CD14-positive monocyte (primary cell): ENCODE measurements at regions of chr1 and their contacts with region 1.

Region 1: DNA sequence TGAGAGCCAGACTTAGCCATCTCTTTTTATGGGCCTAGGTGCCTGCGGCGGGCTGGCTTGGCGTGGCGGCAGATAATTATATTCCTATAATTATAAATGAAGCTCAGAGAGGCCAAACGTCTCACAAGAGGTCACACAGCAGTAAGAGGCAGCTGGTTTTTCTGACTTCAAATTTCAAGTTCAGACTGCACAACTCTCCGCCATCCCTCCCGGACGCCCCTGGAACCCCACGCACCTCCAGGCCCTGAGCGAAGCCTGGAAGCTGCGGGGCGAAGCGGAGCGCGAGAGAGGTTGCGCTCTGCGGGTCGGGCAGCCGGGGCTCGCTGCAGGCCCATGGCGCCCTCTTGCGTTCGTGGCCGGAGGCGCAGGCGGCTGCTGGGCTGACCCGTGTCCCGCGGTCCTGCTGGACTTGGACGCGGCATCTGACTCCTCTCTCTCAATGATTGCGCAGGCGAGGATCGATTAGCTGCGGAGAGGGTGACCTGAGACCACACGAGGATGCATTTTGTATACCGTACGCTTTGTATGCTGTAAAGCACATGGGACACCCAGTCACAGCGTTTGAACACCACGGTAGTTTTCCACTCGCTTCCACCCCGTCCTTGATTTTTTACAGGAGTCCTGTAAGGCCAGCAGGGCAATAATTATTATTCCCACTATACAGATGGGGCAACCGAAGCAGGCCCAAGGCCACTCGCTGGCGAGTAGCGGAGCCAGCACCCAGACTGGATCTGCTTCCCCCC is 272.7 kb downstream of the FOXD2 start:
- DNase-seq: peak; percentile 23 to 48 (median 28)
- H3K4me3 ChIP-seq: no peak overlapping the region
- H3K4me3 Mint-ChIP-seq: peak overlapping the region in 1 of 2 donors; percentile 70
- H3K27ac ChIP-seq: no peak overlapping the region
- H3K27ac Mint-ChIP-seq: no peak overlapping the region
- H3K4me1 ChIP-seq: peaks cover 9 to 15% of the 10 kb centered on the region in 2 donors
- H3K4me1 Mint-ChIP-seq: peaks cover 14% of the 10 kb centered on the region
- H3K27me3 ChIP-seq: peaks cover 48 to 93% of the 10 kb centered on the region in 2 donors
- H3K27me3 Mint-ChIP-seq: peaks cover 76 to 82% (median 77%) of the 10 kb centered on the region in 3 donors
- CTCF ChIP-seq: peak; percentile 94

Region 2: DNA sequence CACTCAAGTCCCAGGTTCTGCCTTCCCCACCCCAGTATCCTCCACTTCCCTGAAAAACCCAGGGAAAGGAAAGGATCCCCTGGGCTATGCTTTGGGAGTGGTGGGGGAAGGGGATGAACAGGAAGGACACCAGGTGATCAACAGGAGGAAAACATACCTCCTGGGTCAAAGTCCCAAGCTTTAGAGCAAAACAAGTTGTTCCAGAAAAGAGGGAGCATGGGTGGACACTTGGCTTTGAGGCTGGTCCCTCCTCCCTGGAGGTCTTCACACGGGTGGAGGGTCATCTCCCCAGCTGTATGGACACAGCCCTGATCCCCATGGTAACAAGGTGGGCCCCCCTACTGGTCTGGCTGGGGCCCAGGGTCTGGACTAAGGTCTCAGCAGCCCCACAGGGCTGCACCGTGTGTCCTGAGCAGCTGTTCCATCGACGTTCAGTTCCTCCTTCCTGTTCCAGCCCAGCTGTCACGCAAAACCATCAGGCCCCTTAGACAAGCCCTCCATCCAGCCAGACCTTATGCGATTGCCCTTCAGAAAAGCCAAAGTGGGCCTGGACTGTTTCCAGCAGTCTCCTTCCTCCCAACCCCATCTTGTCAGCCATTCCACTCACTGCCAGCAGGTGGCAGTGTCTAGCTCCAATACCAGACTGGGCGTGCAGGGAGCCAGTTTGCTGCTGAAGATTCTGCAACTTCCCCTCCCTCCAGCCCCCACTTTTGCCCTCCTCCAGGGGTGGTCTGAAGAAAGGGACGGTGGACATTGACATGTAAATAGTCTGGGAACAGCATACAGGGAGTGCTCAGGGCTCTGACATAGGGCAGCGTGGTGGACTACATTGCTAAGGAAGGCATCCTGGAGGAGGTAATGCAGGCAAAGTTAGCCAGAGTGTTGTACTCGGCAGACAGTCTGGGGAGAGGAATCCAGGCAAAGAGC is 517.8 kb before region 1 on chr1:
- intact Hi-C with region 1: loop called in 1 of 2 experiments (anchors 5 kb)
- DNase-seq: peak; percentile 50 to 60 (median 53)
- H3K4me3 ChIP-seq: no peak overlapping the region
- H3K4me3 Mint-ChIP-seq: no peak overlapping the region
- H3K27ac ChIP-seq: no peak overlapping the region
- H3K27ac Mint-ChIP-seq: peak overlapping the region in 1 of 7 donors; percentile 70
- H3K4me1 ChIP-seq: no peaks in the 10 kb centered on the region
- H3K4me1 Mint-ChIP-seq: peaks cover 6% of the 10 kb centered on the region
- H3K27me3 ChIP-seq: no peaks in the 10 kb centered on the region
- H3K27me3 Mint-ChIP-seq: peaks cover 0 to 9% (median 9%) of the 10 kb centered on the region in 3 donors
- CTCF ChIP-seq: peak; percentile 91

Region 3: GRCh38 chr1:47388891-47389238 is 321.6 kb before region 1 on chr1:
- intact Hi-C with region 1: loop called (anchors 5 kb)
- DNase-seq: peak; percentile 8 to 37 (median 25)
- H3K4me3 ChIP-seq: no peak overlapping the region
- H3K4me3 Mint-ChIP-seq: peak overlapping the region in 1 of 2 donors; percentile 4
- H3K27ac ChIP-seq: no peak overlapping the region
- H3K27ac Mint-ChIP-seq: no peak overlapping the region
- H3K4me1 ChIP-seq: no peaks in the 10 kb centered on the region
- H3K4me1 Mint-ChIP-seq: no peaks in the 10 kb centered on the region
- H3K27me3 ChIP-seq: peaks cover 2 to 3% of the 10 kb centered on the region in 2 donors
- H3K27me3 Mint-ChIP-seq: peaks cover 7 to 17% (median 14%) of the 10 kb centered on the region in 3 donors
- CTCF ChIP-seq: peak; percentile 85

Region 4: DNA sequence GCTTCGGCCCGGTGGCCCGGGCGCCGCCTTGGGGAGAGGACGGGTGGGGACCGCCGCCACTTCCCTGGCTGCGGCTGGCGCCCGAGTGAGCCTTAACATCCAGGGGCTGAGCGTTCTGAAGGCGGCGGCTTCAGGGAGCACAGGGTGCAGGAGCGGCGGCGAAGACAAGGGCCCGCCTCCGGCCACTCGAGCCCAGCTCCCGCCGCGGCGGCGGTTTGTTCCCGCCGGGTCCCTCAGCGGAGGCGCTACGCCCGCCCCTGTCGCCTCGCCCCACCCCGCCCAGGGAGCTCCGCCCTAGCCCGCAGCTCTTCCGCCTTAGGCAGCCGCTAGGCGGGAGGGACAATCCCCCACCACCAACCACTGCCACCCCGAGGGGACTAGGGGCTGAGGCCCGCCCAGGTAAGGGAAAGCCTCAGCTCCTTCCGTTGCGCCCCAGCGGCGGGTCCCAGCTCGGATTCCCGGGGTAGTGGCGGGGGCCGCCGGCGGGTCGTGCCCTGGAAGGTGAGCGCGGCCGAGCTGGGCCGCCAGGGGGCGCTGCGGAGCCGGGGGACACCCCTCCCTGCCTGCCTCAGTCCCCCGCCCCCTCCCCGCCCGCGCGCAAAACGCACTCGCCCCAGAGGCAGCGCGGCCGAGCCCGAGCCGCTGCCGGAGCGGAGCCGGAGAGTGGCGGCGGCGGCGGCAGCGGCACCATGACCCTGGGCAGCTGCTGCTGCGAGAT is 272.9 kb before region 1 on chr1 and contains the start of gene FOXD2:
- intact Hi-C with region 1: loop called in 1 of 2 experiments (anchors 10 kb)
- DNase-seq: peak; percentile 77 to 81 (median 81)
- H3K4me3 ChIP-seq: peak within 1 kb of the TSS; percentile 55 to 81 (median 77)
- H3K4me3 Mint-ChIP-seq: peak within 1 kb of the TSS; percentile 85 to 93
- H3K27ac ChIP-seq: peak within 1 kb of the TSS in 1 of 2 donors; percentile 42
- H3K27ac Mint-ChIP-seq: peak within 1 kb of the TSS in 4 of 7 donors; percentile 40 to 79 (median 50)
- H3K4me1 ChIP-seq: peaks cover 32 to 55% of the 10 kb centered on the region in 2 donors
- H3K4me1 Mint-ChIP-seq: peaks cover 40% of the 10 kb centered on the region
- H3K27me3 ChIP-seq: peaks cover 72 to 81% of the 10 kb centered on the region in 2 donors
- H3K27me3 Mint-ChIP-seq: peaks cover 46 to 57% (median 46%) of the 10 kb centered on the region in 3 donors
- CTCF ChIP-seq: peak; percentile 100
- polyA plus RNA-seq, gene FOXD2: 0.03 to 0.11 TPM in 2 of 3 donors, not detected in the other